CD8-positive, alpha-beta T cell (primary cell): ENCODE measurements at regions of chr10 and their contacts with region 1.

Region 1: DNA sequence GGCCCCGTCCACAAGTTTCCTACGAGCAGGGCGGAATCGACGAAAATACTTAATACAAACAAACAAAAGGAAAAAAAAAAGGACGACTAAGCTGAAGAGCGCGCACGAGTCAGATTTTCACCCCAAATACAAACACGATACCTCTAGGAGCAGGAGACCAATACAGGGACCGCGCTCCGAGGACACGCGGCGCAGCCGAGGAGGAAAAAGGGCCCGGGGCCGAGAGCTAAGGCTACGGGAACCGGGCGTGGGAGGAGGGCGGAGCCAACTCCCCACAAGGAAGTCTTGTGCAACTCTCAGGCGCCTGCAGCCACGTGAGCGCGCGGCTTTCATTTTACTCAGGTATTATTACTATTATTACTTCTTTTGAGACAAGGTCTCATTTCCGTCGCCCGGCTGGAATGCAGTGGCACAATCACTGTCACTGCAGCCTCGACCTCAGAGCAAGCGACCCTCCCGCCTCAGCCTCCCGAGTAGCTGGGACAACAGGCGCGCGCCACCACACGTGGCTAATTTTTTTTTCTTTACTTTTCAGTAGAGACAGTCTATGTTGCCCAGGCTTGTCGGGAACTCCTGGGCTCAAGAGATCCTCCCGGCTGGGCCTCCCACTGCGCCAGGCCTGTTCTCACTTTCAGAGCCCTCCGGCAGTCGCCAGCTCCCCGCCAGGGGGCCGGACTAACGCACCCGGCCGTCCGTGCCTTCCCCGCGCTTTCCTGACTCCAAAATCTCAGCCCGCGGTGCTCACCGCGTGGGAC is 1.2 kb downstream of the HNRNPF start:
- DNase-seq: peak; percentile 64 to 95 (median 83)
- ATAC-seq: peak; percentile 24
- H3K4me3 ChIP-seq: peak overlapping the region; percentile 72 to 98
- H3K4me3 Mint-ChIP-seq: peak overlapping the region; percentile 94
- H3K27ac ChIP-seq: peak overlapping the region; percentile 98 to 99
- H3K27ac Mint-ChIP-seq: peak overlapping the region; percentile 97
- H3K4me1 ChIP-seq: peaks cover 39% of the 10 kb centered on the region
- H3K4me1 Mint-ChIP-seq: peaks cover 33% of the 10 kb centered on the region
- H3K27me3 ChIP-seq: no peaks in the 10 kb centered on the region
- H3K27me3 Mint-ChIP-seq: no peaks in the 10 kb centered on the region
- CTCF ChIP-seq: peak; percentile 33

Region 2: GRCh38 chr10:42552493-42553407 is 855.0 kb before region 1 on chr10:
- CTCF ChIA-PET with region 1: no interaction called
- POLR2A ChIA-PET with region 1: no interaction called
- intact Hi-C with region 1: loop called in 1 of 2 experiments (anchors 2 kb)
- DNase-seq: peak; percentile 86 to 97 (median 95)
- ATAC-seq: peak; percentile 94
- H3K4me3 ChIP-seq: peak overlapping the region; percentile 88 to 94
- H3K4me3 Mint-ChIP-seq: peak overlapping the region; percentile 98
- H3K27ac ChIP-seq: peak overlapping the region; percentile 75 to 85
- H3K27ac Mint-ChIP-seq: peak overlapping the region; percentile 97
- H3K4me1 ChIP-seq: peaks cover 23% of the 10 kb centered on the region
- H3K4me1 Mint-ChIP-seq: peaks cover 49% of the 10 kb centered on the region
- H3K27me3 ChIP-seq: no peaks in the 10 kb centered on the region
- H3K27me3 Mint-ChIP-seq: no peaks in the 10 kb centered on the region
- CTCF ChIP-seq: no peak

Region 3: DNA sequence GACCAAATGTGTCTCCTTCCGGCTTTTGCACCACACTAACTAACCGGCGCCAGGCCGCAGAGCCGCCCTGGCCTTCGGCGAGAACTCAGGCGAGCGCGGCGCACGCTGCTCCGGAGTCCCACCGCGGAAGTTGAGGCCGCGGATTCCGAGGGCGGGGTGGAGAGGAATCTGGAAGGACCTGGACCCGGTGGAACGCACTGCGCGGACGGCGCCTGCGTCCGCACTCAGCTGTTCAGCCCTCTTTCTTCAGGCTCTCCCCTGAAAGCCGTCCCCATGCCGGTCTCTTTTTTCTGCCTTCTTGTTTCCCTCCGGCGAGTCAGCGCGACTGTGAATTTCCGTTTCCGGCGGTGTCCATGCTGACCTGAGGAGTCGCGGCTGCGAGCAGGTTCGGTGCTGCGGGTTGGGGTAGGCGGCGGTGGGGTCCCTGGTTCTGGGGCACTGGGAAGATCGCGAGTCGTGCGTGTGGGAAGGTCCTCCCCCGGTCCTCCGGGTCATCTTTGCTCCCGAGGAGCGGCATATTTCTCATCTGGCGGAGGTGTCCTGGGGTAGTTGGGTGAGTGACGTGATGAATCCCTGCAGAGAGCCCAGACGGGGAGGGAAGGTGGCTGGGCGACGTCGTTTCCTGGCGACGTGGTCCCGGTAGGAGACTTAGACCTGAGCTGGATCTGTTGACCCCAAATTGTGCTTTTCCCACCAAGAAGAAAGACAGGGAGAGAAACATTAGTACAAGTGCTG is 625.1 kb before region 1 on chr10 and contains the start of gene BMS1:
- CTCF ChIA-PET with region 1: no interaction called
- POLR2A ChIA-PET with region 1: no interaction called
- intact Hi-C with region 1: loop called in 1 of 2 experiments (anchors 5 kb)
- DNase-seq: peak; percentile 82 to 92 (median 87)
- ATAC-seq: peak; percentile 85
- H3K4me3 ChIP-seq: peak within 1 kb of the TSS; percentile 83 to 88
- H3K4me3 Mint-ChIP-seq: peak within 1 kb of the TSS; percentile 99
- H3K27ac ChIP-seq: peak within 1 kb of the TSS; percentile 78 to 90
- H3K27ac Mint-ChIP-seq: peak within 1 kb of the TSS; percentile 96
- H3K4me1 ChIP-seq: peaks cover 23% of the 10 kb centered on the region
- H3K4me1 Mint-ChIP-seq: peaks cover 42% of the 10 kb centered on the region
- H3K27me3 ChIP-seq: no peaks in the 10 kb centered on the region
- H3K27me3 Mint-ChIP-seq: peaks cover 4% of the 10 kb centered on the region
- CTCF ChIP-seq: no peak
- total RNA-seq, gene BMS1: 18.1 to 19.9 TPM

Region 4: GRCh38 chr10:43396928-43397624 is 10.7 kb before region 1 on chr10:
- CTCF ChIA-PET with region 1: interaction called, 6 read pairs
- POLR2A ChIA-PET with region 1: interaction called, 15 read pairs
- intact Hi-C with region 1: loop called (anchors 1 kb)
- DNase-seq: peak; percentile 44 to 89 (median 73)
- ATAC-seq: peak; percentile 51
- H3K4me3 ChIP-seq: peak overlapping the region; percentile 64 to 71
- H3K4me3 Mint-ChIP-seq: peak overlapping the region; percentile 94
- H3K27ac ChIP-seq: peak overlapping the region; percentile 66 to 89
- H3K27ac Mint-ChIP-seq: peak overlapping the region; percentile 93
- H3K4me1 ChIP-seq: peaks cover 71% of the 10 kb centered on the region
- H3K4me1 Mint-ChIP-seq: peaks cover 80% of the 10 kb centered on the region
- H3K27me3 ChIP-seq: no peaks in the 10 kb centered on the region
- H3K27me3 Mint-ChIP-seq: no peaks in the 10 kb centered on the region
- CTCF ChIP-seq: no peak

Region 5: GRCh38 chr10:43436400-43437140 is 28.8 kb after region 1 on chr10 and contains the start of gene ZNF487:
- CTCF ChIA-PET with region 1: interaction called, 4 read pairs
- POLR2A ChIA-PET with region 1: interaction called, 8 read pairs
- intact Hi-C with region 1: loop called (anchors 1 kb)
- DNase-seq: peak; percentile 80 to 94 (median 87)
- ATAC-seq: peak; percentile 86
- H3K4me3 ChIP-seq: peak within 1 kb of the TSS; percentile 98 to 99
- H3K4me3 Mint-ChIP-seq: peak within 1 kb of the TSS; percentile 94
- H3K27ac ChIP-seq: peak within 1 kb of the TSS; percentile 98 to 100
- H3K27ac Mint-ChIP-seq: peak within 1 kb of the TSS; percentile 97
- H3K4me1 ChIP-seq: peaks cover 18% of the 10 kb centered on the region
- H3K4me1 Mint-ChIP-seq: peaks cover 26% of the 10 kb centered on the region
- H3K27me3 ChIP-seq: no peaks in the 10 kb centered on the region
- H3K27me3 Mint-ChIP-seq: no peaks in the 10 kb centered on the region
- CTCF ChIP-seq: no peak
- total RNA-seq, gene ZNF487: 7.3 to 8.9 TPM

Region 6: DNA sequence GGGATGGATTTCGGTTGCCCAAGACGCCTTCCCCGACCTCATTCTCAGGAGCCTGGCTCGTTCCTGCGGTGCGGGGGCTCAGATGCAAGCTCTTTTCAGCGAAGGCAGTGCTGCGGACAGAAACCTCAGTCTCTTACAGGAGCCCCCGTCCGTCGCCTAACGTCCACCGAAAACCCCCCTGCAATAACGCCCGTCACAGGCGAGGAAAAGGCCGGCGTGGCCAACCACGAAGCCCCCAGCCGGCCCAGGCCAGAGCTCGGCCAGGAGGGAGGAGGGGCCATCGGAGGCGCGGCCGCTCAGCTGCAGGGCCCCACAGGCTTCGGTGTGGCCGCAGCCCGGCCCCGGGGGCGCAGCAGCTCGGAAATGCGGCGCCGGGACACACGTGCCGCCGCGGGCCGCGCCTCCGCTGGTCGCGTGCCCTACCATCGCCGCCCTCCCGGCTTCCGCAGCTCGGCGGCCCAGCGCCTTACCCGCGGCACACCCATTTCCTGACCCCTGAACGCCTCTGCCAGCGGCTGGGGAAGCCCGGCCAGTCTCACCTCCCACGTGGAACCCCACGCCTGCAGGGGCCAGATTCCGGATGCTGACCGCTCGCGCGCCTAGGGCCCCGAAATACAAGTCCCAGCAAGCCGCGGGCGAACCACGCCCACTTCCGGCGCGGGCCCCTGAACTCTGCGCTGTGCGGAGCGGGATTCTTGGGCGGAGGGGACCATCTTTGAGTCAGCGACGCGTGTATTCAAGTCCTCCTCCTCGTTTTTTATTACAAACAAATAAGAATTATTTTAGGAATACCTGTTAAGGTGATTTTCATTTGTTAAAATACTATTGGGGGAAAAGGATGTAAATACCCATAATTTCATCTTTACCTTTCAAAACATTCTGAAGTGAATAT is 166.5 kb after region 1 on chr10 and contains the start of gene ZNF239:
- CTCF ChIA-PET with region 1: no interaction called
- POLR2A ChIA-PET with region 1: no interaction called
- intact Hi-C with region 1: loop called in 1 of 2 experiments (anchors 10 kb)
- DNase-seq: peak; percentile 62 to 93 (median 82)
- ATAC-seq: peak; percentile 88
- H3K4me3 ChIP-seq: peak within 1 kb of the TSS; percentile 43 to 63
- H3K4me3 Mint-ChIP-seq: peak within 1 kb of the TSS; percentile 85
- H3K27ac ChIP-seq: peak within 1 kb of the TSS; percentile 38 to 66
- H3K27ac Mint-ChIP-seq: peak within 1 kb of the TSS; percentile 90
- H3K4me1 ChIP-seq: peaks cover 25% of the 10 kb centered on the region
- H3K4me1 Mint-ChIP-seq: peaks cover 51% of the 10 kb centered on the region
- H3K27me3 ChIP-seq: no peaks in the 10 kb centered on the region
- H3K27me3 Mint-ChIP-seq: no peaks in the 10 kb centered on the region
- CTCF ChIP-seq: no peak
- total RNA-seq, gene ZNF239: 0.75 to 1.1 TPM

Region 7: GRCh38 chr10:44010873-44011602 is 603.3 kb after region 1 on chr10:
- CTCF ChIA-PET with region 1: no interaction called
- POLR2A ChIA-PET with region 1: no interaction called
- intact Hi-C with region 1: no loop called
- DNase-seq: no peak
- ATAC-seq: no peak
- H3K4me3 ChIP-seq: no peak overlapping the region
- H3K4me3 Mint-ChIP-seq: no peak overlapping the region
- H3K27ac ChIP-seq: no peak overlapping the region
- H3K27ac Mint-ChIP-seq: no peak overlapping the region
- H3K4me1 ChIP-seq: no peaks in the 10 kb centered on the region
- H3K4me1 Mint-ChIP-seq: no peaks in the 10 kb centered on the region
- H3K27me3 ChIP-seq: no peaks in the 10 kb centered on the region
- H3K27me3 Mint-ChIP-seq: no peaks in the 10 kb centered on the region
- CTCF ChIP-seq: no peak